ENCODE measurements at regions of chr1 and their contacts with region 1.

Region 1: DNA sequence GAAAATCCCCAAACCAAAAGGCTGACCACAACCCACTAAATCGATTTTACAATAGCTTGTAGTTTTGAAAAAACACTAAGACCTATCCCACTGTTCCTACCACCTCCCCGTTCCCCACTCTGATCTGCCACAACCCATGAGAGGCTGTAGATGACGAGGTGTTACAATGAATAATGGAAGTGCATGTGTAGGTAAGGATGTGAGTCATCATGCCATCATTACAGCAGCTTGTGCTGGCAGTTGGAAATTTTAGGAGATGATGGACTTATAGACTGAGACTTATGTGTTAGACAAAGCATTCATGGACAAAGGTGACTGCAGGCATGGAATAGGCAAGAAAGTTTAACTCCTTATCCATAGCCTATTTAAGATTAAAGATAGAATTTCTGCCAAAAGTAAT is 184.7 kb upstream of the CACYBP start:
- DNase-seq: peak; percentile 21
- ATAC-seq: peak; percentile 81
- H3K4me3 ChIP-seq: 0 out of 2 replicates have a peak overlapping the region, but pooled peaks have one; percentile 53
- H3K27ac ChIP-seq: peak overlapping the region; percentile 68
- H3K4me1 ChIP-seq: peaks cover 45% of the 10 kb centered on the region
- H3K27me3 ChIP-seq: no peaks in the 10 kb centered on the region
- CTCF ChIP-seq: no peak
- EP300 ChIP-seq: no peak
- POLR2A ChIP-seq: no peak
- RAD21 ChIP-seq: no peak

Region 2: GRCh38 chr1:174800216-174800851 is 14.7 kb before region 1 on chr1:
- CTCF ChIA-PET with region 1: interaction called, 8 read pairs
- POLR2A ChIA-PET with region 1: interaction called, 24 read pairs
- RAD21 ChIA-PET with region 1: interaction called, 21 read pairs
- SMC1A ChIA-PET with region 1: interaction called, 13 read pairs
- in situ Hi-C with region 1: no loop called
- intact Hi-C with region 1: no loop called
- DNase-seq: no peak
- ATAC-seq: peak; percentile 21
- H3K4me3 ChIP-seq: peak overlapping the region; percentile 79
- H3K27ac ChIP-seq: peak overlapping the region; percentile 77
- H3K4me1 ChIP-seq: peaks cover 23% of the 10 kb centered on the region
- H3K27me3 ChIP-seq: no peaks in the 10 kb centered on the region
- CTCF ChIP-seq: no peak
- EP300 ChIP-seq: no peak
- POLR2A ChIP-seq: no peak
- RAD21 ChIP-seq: no peak

Region 3: DNA sequence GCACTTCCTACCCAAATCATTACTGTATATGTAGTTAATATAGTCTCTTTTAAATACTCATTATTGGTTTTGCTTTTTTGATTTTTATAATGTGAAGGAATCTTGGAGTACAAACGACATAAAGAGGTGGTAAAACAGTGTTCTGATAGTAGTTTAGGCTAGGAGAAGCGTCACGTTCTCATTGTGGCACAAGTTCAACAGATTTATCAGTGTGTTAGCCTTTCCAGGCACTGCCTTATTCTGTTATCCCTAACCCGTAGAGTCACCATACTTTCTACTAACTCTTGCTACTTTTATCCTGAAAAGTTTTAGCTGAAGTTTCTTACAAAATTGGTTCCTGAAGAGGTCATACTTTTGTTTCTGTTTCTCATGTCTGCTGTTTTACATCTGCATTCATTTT is 10.1 kb after region 1 on chr1:
- CTCF ChIA-PET with region 1: interaction called, 8 read pairs
- POLR2A ChIA-PET with region 1: no interaction called
- RAD21 ChIA-PET with region 1: interaction called, 3 read pairs
- SMC1A ChIA-PET with region 1: interaction called, 10 read pairs
- in situ Hi-C with region 1: no loop called
- intact Hi-C with region 1: no loop called
- DNase-seq: no peak
- ATAC-seq: no peak
- H3K4me3 ChIP-seq: no peak overlapping the region
- H3K27ac ChIP-seq: no peak overlapping the region
- H3K4me1 ChIP-seq: no peaks in the 10 kb centered on the region; the same call in 1 of the 2 replicates
- H3K27me3 ChIP-seq: no peaks in the 10 kb centered on the region
- CTCF ChIP-seq: no peak
- EP300 ChIP-seq: no peak
- POLR2A ChIP-seq: no peak
- RAD21 ChIP-seq: no peak

Region 4: GRCh38 chr1:174874331-174875053 is 59.5 kb after region 1 on chr1:
- CTCF ChIA-PET with region 1: interaction called, 4 read pairs
- POLR2A ChIA-PET with region 1: no interaction called
- RAD21 ChIA-PET with region 1: interaction called, 10 read pairs
- SMC1A ChIA-PET with region 1: interaction called, 7 read pairs
- in situ Hi-C with region 1: no loop called
- intact Hi-C with region 1: no loop called
- DNase-seq: peak; percentile 40
- ATAC-seq: peak; percentile 83
- H3K4me3 ChIP-seq: peak overlapping the region; percentile 54; the same call in 1 of the 2 replicates
- H3K27ac ChIP-seq: peak overlapping the region; percentile 47
- H3K4me1 ChIP-seq: peaks cover 25% of the 10 kb centered on the region
- H3K27me3 ChIP-seq: no peaks in the 10 kb centered on the region
- CTCF ChIP-seq: no peak
- EP300 ChIP-seq: no peak
- POLR2A ChIP-seq: no peak
- RAD21 ChIP-seq: no peak